Endothelial cell of umbilical vein (primary cell): ENCODE measurements at regions of chr1 and their contacts with region 1.

Region 1: DNA sequence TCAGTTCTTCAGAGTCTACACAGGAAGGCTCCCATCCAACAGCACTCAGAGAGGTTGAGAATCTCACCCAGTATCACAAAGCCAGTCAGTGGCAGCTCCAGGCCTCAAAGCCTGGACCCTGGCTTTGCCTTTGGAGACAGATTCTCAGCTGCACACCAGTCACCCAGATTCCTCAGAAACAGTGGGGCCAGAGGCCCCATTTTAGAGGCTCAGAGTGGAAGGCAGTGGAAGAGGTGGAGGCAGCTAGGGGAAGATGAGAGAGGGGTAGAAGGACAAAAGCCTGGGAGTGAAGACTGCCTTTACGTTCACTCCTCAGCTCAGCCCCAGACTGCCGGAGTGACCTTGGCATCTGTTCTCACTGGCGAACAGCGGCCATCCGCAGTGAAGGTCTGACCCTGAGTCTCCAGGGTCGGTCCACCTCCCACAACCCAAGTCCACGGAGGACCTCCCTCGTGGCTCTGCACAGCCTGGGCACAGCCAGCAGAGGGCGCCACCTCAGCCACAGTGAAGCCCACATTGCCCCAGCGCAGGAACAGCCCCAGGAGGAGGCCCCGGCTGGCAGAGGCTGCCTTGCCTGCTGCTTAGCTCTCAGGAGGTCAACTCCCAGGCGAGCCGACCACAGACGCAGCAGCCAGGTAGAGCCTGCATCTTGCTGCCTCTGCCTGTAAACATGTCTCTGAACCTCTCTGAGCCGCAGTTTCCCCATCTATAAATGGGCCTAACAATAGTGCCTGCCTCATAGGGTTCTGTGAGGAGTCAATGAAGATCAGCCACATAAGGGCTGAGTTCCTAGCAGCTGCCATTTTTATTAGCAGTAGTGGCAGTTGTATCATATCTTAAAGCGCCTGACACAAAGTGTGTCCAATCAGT is 5.9 kb upstream of the FNDC5 start:
- DNase-seq: peak; percentile 58
- H3K4me3 ChIP-seq: no peak overlapping the region
- H3K27ac ChIP-seq: no peak overlapping the region
- H3K4me1 ChIP-seq: no peaks in the 10 kb centered on the region
- H3K27me3 ChIP-seq: peaks cover 6 to 9% of the 10 kb centered on the region in 2 experiments
- CTCF ChIP-seq: peak; percentile 89 to 99
- POLR2A ChIP-seq: no peak

Region 2: GRCh38 chr1:32892368-32893197 is 16.0 kb after region 1 on chr1:
- CTCF ChIA-PET with region 1: interaction called, 51 read pairs
- POLR2A ChIA-PET with region 1: no interaction called
- dilution Hi-C with region 1: no loop called
- intact Hi-C with region 1: no loop called
- DNase-seq: no peak
- H3K4me3 ChIP-seq: peak overlapping the region; percentile 16 to 35 (median 30)
- H3K27ac ChIP-seq: no peak overlapping the region
- H3K4me1 ChIP-seq: peaks cover 6% of the 10 kb centered on the region
- H3K27me3 ChIP-seq: peaks cover 13 to 19% of the 10 kb centered on the region in 2 experiments
- CTCF ChIP-seq: peak; percentile 56 to 76
- POLR2A ChIP-seq: no peak

Region 3: DNA sequence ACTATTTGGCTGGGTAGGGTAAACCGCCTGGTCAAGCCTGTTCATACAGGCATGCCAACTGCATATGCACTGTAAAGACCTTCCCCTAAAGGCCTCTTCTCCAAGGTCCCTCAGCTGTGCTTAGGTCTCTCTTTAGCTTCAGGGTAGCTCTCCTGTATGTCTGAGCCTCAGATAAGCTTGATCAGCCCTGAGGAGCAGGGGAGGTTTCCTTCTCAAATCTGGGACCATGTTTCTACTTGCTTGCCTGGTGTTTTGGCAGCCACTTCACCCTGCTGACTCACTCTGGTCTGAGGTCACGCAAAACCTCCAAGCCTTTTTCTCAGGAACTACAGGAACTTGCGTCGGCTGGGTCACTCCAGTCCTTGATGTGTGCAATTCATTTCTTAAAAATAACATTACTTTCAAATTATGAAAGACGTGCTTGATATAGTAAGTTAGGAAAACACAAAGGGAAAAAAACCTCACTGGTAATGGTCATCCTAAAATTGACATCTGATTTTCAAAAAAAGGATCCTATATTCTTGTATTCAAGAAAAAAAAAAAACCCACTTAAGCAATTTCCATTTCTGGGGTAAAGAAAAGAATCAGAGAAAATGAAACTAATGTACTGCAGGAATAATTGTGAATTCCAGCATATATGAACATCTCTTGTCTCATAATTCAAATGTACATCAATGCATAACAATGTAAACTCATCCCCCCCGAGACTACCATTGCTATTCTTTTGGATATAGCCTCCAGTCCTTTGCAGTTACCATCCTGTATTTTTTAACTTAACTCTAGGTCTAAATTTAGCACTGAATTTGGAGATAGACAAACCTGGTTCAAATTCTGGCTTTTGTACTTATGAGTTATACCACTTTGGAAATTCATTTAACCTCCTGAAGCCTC is 112.8 kb after region 1 on chr1:
- CTCF ChIA-PET with region 1: no interaction called
- POLR2A ChIA-PET with region 1: no interaction called
- dilution Hi-C with region 1: no loop called
- intact Hi-C with region 1: no loop called
- DNase-seq: peak; percentile 97
- H3K4me3 ChIP-seq: no peak overlapping the region
- H3K27ac ChIP-seq: peak overlapping the region; percentile 87
- H3K4me1 ChIP-seq: peaks cover 27% of the 10 kb centered on the region
- H3K27me3 ChIP-seq: no peaks in the 10 kb centered on the region
- CTCF ChIP-seq: no peak
- POLR2A ChIP-seq: no peak

Region 4: DNA sequence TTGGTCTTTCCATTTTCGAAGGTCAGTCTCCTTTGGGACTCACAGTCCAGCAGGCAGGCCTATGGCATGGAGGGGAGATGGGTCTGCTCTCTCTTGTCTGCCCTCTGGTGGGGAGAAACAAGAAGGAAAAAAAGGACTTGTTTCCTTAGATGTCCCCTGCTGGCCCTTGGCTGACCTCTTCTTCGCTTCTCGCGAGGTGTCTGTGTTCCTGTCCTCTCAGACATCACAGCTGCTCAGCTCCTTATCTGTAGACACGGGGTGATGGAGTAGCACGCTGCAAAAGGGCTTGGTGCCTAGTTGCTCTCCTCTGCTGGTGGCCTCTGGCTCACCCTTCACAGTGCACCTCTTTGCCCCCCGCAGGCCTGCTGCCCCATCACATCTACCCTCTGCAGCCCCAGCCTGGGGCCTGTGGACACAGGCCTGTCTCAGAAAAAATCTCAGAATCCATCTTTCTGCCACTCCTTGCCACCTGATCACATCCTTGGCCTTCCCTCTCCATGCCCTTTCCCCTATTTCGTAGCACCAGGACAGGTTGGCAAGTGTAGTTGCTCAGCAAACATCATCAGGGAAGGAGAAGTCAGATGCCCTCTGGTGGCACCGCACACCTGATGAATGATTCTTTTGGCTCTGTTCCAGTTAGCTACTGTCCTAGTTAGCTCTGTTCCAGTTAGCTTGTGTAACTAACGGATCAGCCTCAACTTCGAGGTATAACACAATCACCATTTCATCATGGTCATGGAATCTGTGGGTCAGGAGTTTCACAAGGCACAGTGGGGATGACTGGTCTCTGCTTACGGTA is 178.8 kb after region 1 on chr1:
- CTCF ChIA-PET with region 1: interaction called, 38 read pairs
- POLR2A ChIA-PET with region 1: no interaction called
- dilution Hi-C with region 1: no loop called
- intact Hi-C with region 1: loop called (anchors 1 kb)
- DNase-seq: peak; percentile 86
- H3K4me3 ChIP-seq: no peak overlapping the region
- H3K27ac ChIP-seq: no peak overlapping the region
- H3K4me1 ChIP-seq: peaks cover 2% of the 10 kb centered on the region
- H3K27me3 ChIP-seq: no peaks in the 10 kb centered on the region
- CTCF ChIP-seq: peak; percentile 65 to 78
- POLR2A ChIP-seq: no peak

Region 5: GRCh38 chr1:33080885-33081553 is 204.4 kb after region 1 on chr1 and contains the start of gene AZIN2:
- CTCF ChIA-PET with region 1: interaction called, 175 read pairs
- POLR2A ChIA-PET with region 1: no interaction called
- dilution Hi-C with region 1: no loop called
- intact Hi-C with region 1: loop called (anchors 1 kb)
- DNase-seq: peak; percentile 92
- H3K4me3 ChIP-seq: peak within 1 kb of the TSS; percentile 28 to 64 (median 55)
- H3K27ac ChIP-seq: no peak within 1 kb of the TSS
- H3K4me1 ChIP-seq: peaks cover 10% of the 10 kb centered on the region
- H3K27me3 ChIP-seq: peaks cover 11 to 22% of the 10 kb centered on the region in 2 experiments
- CTCF ChIP-seq: no peak
- POLR2A ChIP-seq: no peak
- total RNA-seq, gene AZIN2: 0.76 and 0.91 TPM in 2 replicates

Region 6: GRCh38 chr1:33110477-33110876 is 233.9 kb after region 1 on chr1:
- CTCF ChIA-PET with region 1: no interaction called
- POLR2A ChIA-PET with region 1: no interaction called
- dilution Hi-C with region 1: no loop called
- intact Hi-C with region 1: no loop called
- DNase-seq: no peak
- H3K4me3 ChIP-seq: no peak overlapping the region
- H3K27ac ChIP-seq: no peak overlapping the region
- H3K4me1 ChIP-seq: no peaks in the 10 kb centered on the region
- H3K27me3 ChIP-seq: peaks cover 5 to 12% of the 10 kb centered on the region in 2 experiments
- CTCF ChIP-seq: no peak
- POLR2A ChIP-seq: no peak